ENCODE measurements at regions of chr15 and their contacts with region 1.

Region 1: GRCh38 chr15:70859322-70859908 is 5.5 kb upstream of the LARP6 start:
- DNase-seq: no peak
- H3K4me3 ChIP-seq: no peak overlapping the region
- H3K27ac ChIP-seq: no peak overlapping the region
- H3K4me1 ChIP-seq: peaks cover 0 to 1% (median 1%) of the 10 kb centered on the region in 4 experiments
- H3K27me3 ChIP-seq: peaks cover 3 to 28% (median 11%) of the 10 kb centered on the region in 5 experiments

Region 2: GRCh38 chr15:70875001-70875782 is 15.8 kb after region 1 on chr15:
- CTCF ChIA-PET with region 1: interaction called, 10 read pairs
- POLR2A ChIA-PET with region 1: no interaction called
- DNase-seq: no peak
- H3K4me3 ChIP-seq: no peak overlapping the region
- H3K27ac ChIP-seq: no peak overlapping the region
- H3K4me1 ChIP-seq: no peaks in the 10 kb centered on the region
- H3K27me3 ChIP-seq: peaks cover 2 to 23% (median 15%) of the 10 kb centered on the region in 5 experiments